GM12878 (cell line): ENCODE measurements at regions of chr15 and their contacts with region 1.

Region 1: GRCh38 chr15:41904541-41905005 is 10.7 kb upstream of the SPTBN5 start:
- DNase-seq: peak; percentile 21
- ATAC-seq: peak; percentile 96
- H3K4me3 ChIP-seq: no peak overlapping the region
- H3K27ac ChIP-seq: no peak overlapping the region
- H3K4me1 ChIP-seq: no peaks in the 10 kb centered on the region
- H3K27me3 ChIP-seq: no peaks in the 10 kb centered on the region
- CTCF ChIP-seq: peak; percentile 82 to 91 (median 86)
- EP300 ChIP-seq: no peak
- POLR2A ChIP-seq: no peak; the same call in none of the 2 replicates
- RAD21 ChIP-seq: peak; percentile 78

Region 2: GRCh38 chr15:41603941-41604911 is 300.3 kb before region 1 on chr15:
- CTCF ChIA-PET with region 1: interaction called, 3 read pairs
- POLR2A ChIA-PET with region 1: no interaction called
- RAD21 ChIA-PET with region 1: interaction called, 10 read pairs
- SMC1A ChIA-PET with region 1: interaction called, 6 read pairs
- in situ Hi-C with region 1: no loop called
- intact Hi-C with region 1: no loop called
- DNase-seq: no peak
- ATAC-seq: peak; percentile 97
- H3K4me3 ChIP-seq: no peak overlapping the region
- H3K27ac ChIP-seq: no peak overlapping the region
- H3K4me1 ChIP-seq: no peaks in the 10 kb centered on the region
- H3K27me3 ChIP-seq: no peaks in the 10 kb centered on the region
- CTCF ChIP-seq: peak; percentile 68 to 77 (median 75)
- EP300 ChIP-seq: no peak
- POLR2A ChIP-seq: no peak
- RAD21 ChIP-seq: peak; percentile 64

Region 3: DNA sequence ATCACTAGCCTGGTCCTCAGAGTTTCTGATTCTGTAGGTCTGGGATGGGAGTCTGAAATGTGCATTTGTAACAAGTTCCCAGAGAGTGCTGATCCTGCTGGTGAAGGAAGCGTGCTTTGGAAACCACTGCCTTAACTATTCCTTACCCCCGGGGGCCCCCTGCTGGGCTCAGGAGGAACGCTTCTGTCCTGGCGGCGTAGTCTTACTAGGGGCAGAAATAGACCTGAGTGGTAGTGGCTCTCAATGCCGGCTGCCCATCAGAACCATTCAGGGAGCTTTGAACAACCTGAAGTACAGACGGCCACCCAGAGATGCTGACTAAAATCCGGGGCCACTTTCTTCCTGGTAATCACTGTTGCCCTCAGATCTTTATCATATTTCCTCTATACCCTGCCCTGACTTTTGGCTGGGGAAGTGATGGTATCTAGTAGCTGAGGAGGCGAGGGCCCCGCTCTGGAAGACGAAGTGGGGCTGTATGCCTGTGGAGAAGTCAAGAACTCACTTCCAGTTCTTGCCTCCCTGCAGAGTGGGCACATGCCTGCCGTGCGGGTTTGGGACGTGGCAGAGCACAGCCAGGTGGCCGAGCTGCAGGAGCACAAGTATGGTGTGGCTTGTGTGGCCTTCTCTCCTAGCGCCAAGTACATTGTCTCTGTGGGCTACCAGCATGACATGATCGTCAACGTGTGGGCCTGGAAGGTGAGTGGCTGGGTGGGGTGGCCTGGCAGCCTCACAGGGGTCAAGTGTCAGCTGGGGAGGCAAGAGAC is 93.0 kb before region 1 on chr15:
- CTCF ChIA-PET with region 1: interaction called, 31 read pairs
- POLR2A ChIA-PET with region 1: no interaction called
- RAD21 ChIA-PET with region 1: interaction called, 15 read pairs
- SMC1A ChIA-PET with region 1: no interaction called
- in situ Hi-C with region 1: no loop called
- intact Hi-C with region 1: no loop called
- DNase-seq: no peak
- ATAC-seq: peak; percentile 98
- H3K4me3 ChIP-seq: no peak overlapping the region
- H3K27ac ChIP-seq: no peak overlapping the region
- H3K4me1 ChIP-seq: no peaks in the 10 kb centered on the region
- H3K27me3 ChIP-seq: no peaks in the 10 kb centered on the region
- CTCF ChIP-seq: peak; percentile 90 to 94 (median 92)
- EP300 ChIP-seq: no peak
- POLR2A ChIP-seq: no peak
- RAD21 ChIP-seq: peak; percentile 98

Region 4: DNA sequence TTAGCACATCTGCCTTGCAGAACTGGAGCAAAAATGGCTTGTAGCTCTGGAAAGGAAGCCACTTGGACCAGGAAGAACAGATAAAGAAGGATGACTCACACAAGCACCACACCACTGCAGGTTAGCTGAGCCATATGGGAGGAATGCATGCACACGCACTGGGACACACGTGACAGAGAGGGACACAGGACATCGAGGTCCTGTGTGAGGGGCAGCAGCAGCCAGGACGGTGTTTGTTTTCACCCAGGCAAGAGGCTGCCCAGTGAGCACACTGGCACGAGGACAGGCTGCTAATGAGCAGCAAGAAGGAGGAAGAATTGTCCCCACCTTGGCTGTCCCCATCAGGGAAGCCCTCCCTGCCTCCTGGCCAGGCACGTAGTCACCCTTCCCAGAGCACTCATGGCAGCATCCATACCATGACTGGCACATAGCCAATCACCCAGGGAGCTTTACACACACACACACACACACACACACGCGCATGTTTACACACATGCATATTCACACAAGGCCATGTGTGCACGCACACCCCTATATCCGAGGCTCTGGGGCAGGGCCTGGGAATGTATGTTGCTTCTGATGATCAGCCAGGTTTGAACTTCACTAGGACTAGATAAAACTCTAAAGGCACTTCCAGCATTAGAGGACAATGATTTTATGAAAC is 13.3 kb after region 1 on chr15:
- CTCF ChIA-PET with region 1: interaction called, 21 read pairs
- POLR2A ChIA-PET with region 1: no interaction called
- RAD21 ChIA-PET with region 1: interaction called, 11 read pairs
- SMC1A ChIA-PET with region 1: interaction called, 10 read pairs
- in situ Hi-C with region 1: no loop called
- intact Hi-C with region 1: no loop called
- DNase-seq: no peak
- ATAC-seq: no peak
- H3K4me3 ChIP-seq: no peak overlapping the region
- H3K27ac ChIP-seq: no peak overlapping the region
- H3K4me1 ChIP-seq: peaks cover 5% of the 10 kb centered on the region
- H3K27me3 ChIP-seq: no peaks in the 10 kb centered on the region
- CTCF ChIP-seq: no peak
- EP300 ChIP-seq: no peak
- POLR2A ChIP-seq: peak; percentile 58
- RAD21 ChIP-seq: no peak

Region 5: GRCh38 chr15:41972253-41973242 is 68.0 kb after region 1 on chr15 and contains the start of gene EHD4:
- CTCF ChIA-PET with region 1: interaction called, 11 read pairs
- POLR2A ChIA-PET with region 1: no interaction called
- RAD21 ChIA-PET with region 1: interaction called, 4 read pairs
- SMC1A ChIA-PET with region 1: interaction called, 4 read pairs
- in situ Hi-C with region 1: no loop called
- intact Hi-C with region 1: no loop called
- DNase-seq: peak; percentile 92
- ATAC-seq: peak; percentile 78
- H3K4me3 ChIP-seq: peak within 1 kb of the TSS; percentile 93
- H3K27ac ChIP-seq: peak within 1 kb of the TSS; percentile 100
- H3K4me1 ChIP-seq: peaks cover 24% of the 10 kb centered on the region
- H3K27me3 ChIP-seq: no peaks in the 10 kb centered on the region
- CTCF ChIP-seq: peak in 2 of 3 experiments; percentile 34 to 38; a peak in 3 of 6 replicates
- EP300 ChIP-seq: 0 out of 4 replicates have a peak, but pooled peaks of 1 of the 2 experiments have one; percentile 11
- POLR2A ChIP-seq: peak; percentile 96
- RAD21 ChIP-seq: no peak; the same call in 1 of the 2 replicates
- polyA plus RNA-seq, gene EHD4: 4.2 to 8.6 TPM